Lower leg skin (tissue), 4 donors: ENCODE measurements at regions of chr5 and their contacts with region 1.

Region 1: GRCh38 chr5:32489791-32490582 is 45.4 kb upstream of the ZFR start:
- DNase-seq: peak; percentile 66 to 94
- H3K4me3 ChIP-seq: no peak overlapping the region
- CTCF ChIP-seq: peak in 1 of 3 donors; percentile 37
- POLR2A ChIP-seq: no peak

Region 2: DNA sequence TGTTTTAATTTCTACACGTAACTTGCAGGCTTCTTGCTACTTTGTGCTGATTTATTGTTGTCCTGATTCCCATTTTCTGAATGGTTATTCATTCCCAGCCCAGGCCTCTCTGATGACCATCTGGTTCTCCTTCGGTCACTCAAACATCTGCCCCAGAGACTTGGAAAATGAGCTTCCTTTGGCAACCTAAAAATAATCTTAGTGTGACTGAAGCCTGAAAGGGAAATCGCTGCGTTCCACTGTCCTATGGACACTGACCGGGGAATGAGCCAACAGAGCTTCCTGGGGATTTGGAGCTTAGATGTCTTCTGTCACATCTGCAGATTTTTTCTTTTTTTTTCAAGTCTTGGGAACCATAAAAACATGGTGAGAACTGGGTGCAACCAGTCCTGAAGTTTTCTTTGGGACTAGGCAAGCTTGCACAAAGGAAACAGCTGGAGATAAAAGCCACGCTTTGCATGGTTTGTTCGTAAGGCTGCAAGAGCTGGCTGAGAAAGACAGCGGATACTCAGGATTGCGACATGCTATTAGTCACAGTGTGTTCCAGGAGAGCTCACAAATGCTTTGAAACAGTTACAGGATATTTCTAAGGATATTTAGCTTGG is 462.2 kb before region 1 on chr5:
- intact Hi-C with region 1: no loop called
- DNase-seq: peak in 1 of 2 donors; percentile 85
- H3K4me3 ChIP-seq: no peak overlapping the region
- CTCF ChIP-seq: no peak
- POLR2A ChIP-seq: no peak

Region 3: DNA sequence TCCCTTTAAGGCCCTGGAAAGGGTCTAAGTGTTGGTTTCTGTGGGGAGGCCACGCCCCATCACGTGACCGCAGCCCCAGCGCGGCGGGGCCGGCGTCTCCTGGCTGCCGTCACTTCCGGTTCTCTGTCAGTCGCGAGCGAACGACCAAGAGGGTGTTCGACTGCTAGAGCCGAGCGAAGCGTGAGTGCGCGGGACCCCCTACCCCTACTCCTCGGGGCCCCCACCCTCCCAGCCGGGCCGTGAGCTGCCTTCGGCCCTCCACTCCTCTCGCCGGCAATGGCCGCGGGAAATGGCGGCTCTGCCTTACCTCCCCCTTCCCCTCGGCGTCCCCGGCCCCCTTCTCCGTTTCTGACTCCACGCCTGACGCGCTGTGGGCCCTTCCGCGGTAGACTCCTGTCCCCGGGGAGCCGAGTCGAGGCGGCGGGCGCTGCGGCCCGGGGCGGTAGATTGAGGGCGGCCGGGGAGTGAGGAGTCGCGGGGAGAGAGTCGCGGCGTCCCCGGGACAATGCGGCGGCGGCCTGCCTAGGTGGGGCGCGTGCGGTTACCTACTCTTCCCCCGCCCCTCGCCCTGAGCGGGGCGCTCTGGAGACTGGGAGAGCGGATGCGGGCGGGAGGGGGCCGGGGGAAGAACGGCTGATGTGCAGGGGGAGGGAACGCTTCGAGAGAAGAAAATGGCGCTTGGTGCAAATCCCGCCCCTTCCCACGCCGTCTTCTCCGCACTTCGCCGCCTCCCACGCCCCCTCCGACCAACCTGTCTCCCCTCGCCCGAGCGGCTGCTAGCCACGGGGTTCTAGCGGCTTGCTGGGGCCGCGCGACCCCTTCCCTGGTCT is 95.7 kb after region 1 on chr5 and contains the start of gene SUB1:
- intact Hi-C with region 1: loop called (anchors 10 kb)
- DNase-seq: peak; percentile 83 to 98
- H3K4me3 ChIP-seq: peak within 1 kb of the TSS; percentile 96
- CTCF ChIP-seq: no peak
- POLR2A ChIP-seq: peak in 1 of 2 donors; percentile 85
- total RNA-seq, gene SUB1: 63.0 to 137 (median 102) TPM